Activated T-helper 1 cell treated with anti-CD3 and anti-CD28 coated beads, Interleukin-12 subunit alpha, Interleukin-12 subunit beta, Interleukin-2, Interleukin-4 antibody, amounts not matched to agents 30 ng/mL and 10 ng/mL and 1 ng/mL, durations not matched to agents 14 hours and 24 hours and 36 hours (primary cell): ENCODE measurements at regions of chr17 and their contacts with region 1.

Region 1: DNA sequence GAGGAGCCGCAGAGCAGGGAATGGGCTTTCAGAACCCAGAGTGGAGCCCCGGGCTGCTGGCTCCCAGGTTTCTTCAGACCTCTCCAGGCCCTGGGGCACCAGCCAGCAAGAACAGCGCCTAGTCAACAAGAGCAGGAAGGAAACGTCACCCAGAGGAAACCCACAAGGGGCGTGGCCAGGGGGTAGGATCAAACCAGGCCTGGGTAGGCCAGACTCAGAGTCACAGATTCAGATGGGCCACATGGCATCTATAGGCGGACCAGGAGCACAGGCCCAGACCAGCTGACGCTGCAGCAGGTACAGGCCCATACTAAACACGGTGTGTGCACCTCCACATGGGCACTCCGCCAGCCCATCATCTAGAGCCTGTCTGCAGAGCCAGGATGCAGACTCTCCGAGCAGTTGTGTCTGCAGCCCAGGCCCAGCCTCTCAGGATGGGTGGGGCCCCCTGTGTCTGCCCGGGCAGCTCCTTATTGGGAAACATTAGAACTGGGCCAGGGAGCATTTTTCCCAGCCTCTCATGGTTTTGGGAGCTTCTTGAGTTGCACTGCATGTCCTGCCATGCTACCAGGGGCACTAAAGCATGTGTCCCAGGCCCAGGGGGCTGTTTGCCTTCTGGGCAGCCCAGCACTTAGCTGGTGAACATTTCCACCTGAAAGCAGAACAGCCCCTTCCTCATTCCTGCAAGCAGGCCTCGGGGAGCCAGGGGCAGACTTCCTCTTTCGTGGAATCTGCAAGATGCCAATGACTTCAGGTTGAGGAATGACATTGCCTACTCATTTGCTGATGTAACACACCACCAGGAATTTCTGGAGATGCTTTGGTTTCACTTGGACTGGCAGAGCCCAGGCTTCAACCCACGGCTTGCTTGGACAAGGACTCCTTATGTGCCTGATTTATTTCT is at the start of gene NLRP1:
- DNase-seq: peak; percentile 93
- H3K4me3 Mint-ChIP-seq: peak within 1 kb of the TSS; percentile 95
- H3K27ac Mint-ChIP-seq: peak within 1 kb of the TSS; percentile 93
- H3K4me1 Mint-ChIP-seq: peaks cover 49% of the 10 kb centered on the region
- H3K27me3 Mint-ChIP-seq: peaks cover 3% of the 10 kb centered on the region
- total RNA-seq, gene NLRP1: 26.0 and 29.6 TPM in 2 replicates

Region 2: GRCh38 chr17:5468075-5468473 is 116.6 kb before region 1 on chr17:
- intact Hi-C with region 1: no loop called
- DNase-seq: no peak
- H3K4me3 Mint-ChIP-seq: peak overlapping the region; percentile 92
- H3K27ac Mint-ChIP-seq: peak overlapping the region; percentile 46
- H3K4me1 Mint-ChIP-seq: peaks cover 50% of the 10 kb centered on the region
- H3K27me3 Mint-ChIP-seq: no peaks in the 10 kb centered on the region

Region 3: DNA sequence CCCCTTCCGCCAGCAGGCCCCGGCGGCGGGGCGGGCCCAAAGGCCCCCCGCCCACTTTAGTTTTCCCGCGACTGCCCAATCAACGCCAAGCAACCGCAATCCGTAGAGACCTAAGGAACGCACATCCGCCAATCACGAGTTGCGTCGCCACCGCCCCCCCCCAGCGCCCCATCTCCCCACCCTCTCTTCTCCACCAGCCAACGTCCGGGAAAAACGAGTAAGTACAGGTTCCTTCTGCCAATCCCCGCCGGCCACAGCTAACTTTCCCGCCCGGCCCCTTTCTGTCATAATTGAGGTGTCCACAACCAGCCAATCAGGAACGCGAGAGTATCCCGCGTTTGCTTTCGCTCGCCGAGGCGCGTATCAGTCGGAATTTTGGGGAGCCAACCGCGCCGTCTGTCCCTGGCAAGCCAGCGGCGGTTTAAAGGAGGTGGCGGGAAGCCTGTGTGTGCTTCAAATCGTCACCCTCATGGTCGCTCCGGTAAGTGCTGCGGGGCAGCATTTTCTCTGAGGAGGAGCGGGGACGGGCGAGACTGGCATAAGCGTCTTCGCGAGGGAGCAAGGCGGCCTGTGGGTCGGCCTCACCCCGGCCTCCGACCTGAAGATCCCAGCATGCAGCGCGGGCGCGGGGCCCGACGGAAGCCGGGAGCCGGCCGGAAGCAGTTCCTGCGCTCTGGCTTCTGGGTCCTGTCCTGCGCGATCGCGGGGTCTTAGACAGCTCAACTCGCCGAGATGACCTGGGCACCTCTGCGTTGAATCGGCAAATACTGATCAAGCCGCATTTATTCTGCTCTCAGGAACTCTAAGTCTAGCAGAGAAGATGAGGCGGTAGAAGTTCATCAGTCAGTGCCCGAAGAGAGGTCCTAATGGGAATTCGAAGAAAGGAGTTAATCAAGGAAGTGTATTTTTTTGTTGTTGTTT is 98.2 kb before region 1 on chr17 and contains the start of gene MIS12:
- intact Hi-C with region 1: loop called (anchors 1 kb)
- DNase-seq: peak; percentile 95
- H3K4me3 Mint-ChIP-seq: peak within 1 kb of the TSS; percentile 98
- H3K27ac Mint-ChIP-seq: peak within 1 kb of the TSS; percentile 96
- H3K4me1 Mint-ChIP-seq: peaks cover 49% of the 10 kb centered on the region
- H3K27me3 Mint-ChIP-seq: no peaks in the 10 kb centered on the region
- total RNA-seq, gene MIS12: 38.1 and 39.6 TPM in 2 replicates

Region 4: GRCh38 chr17:5526821-5527598 is 57.6 kb before region 1 on chr17:
- intact Hi-C with region 1: loop called (anchors 2 kb)
- DNase-seq: peak; percentile 18
- H3K4me3 Mint-ChIP-seq: no peak overlapping the region
- H3K27ac Mint-ChIP-seq: peak overlapping the region; percentile 84
- H3K4me1 Mint-ChIP-seq: peaks cover 13% of the 10 kb centered on the region
- H3K27me3 Mint-ChIP-seq: no peaks in the 10 kb centered on the region

Region 5: GRCh38 chr17:6421700-6422604 is 837.3 kb after region 1 on chr17:
- intact Hi-C with region 1: loop called (anchors 1 kb)
- DNase-seq: peak; percentile 48
- H3K4me3 Mint-ChIP-seq: no peak overlapping the region
- H3K27ac Mint-ChIP-seq: peak overlapping the region; percentile 34
- H3K4me1 Mint-ChIP-seq: peaks cover 2% of the 10 kb centered on the region
- H3K27me3 Mint-ChIP-seq: peaks cover 50% of the 10 kb centered on the region

Region 6: DNA sequence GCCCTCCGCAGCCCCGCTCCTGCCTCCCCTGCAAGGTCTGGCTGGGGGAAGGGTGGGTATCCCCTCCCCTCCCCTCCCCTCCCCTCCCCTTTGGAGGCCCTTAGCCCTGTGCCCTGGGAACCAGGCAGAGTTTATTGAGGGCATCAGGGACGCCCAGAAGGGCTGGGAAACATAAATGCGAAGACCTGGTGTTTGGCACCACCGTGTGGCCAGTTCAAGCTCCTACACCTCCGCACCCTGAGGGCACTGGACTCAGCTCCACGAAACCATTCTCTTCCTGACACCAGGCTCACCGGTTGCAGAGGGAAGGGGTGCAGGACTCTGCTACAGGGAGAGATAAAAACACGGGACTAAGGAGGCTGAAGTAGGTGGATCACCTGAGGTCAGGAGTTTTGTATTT is 851.3 kb after region 1 on chr17:
- intact Hi-C with region 1: loop called (anchors 1 kb)
- DNase-seq: peak; percentile 44
- H3K4me3 Mint-ChIP-seq: no peak overlapping the region
- H3K27ac Mint-ChIP-seq: no peak overlapping the region
- H3K4me1 Mint-ChIP-seq: no peaks in the 10 kb centered on the region
- H3K27me3 Mint-ChIP-seq: peaks cover 59% of the 10 kb centered on the region

Region 7: GRCh38 chr17:6753006-6753445 is 1168.4 kb after region 1 on chr17:
- intact Hi-C with region 1: loop called (anchors 10 kb)
- DNase-seq: no peak
- H3K4me3 Mint-ChIP-seq: no peak overlapping the region
- H3K27ac Mint-ChIP-seq: peak overlapping the region; percentile 64
- H3K4me1 Mint-ChIP-seq: peaks cover 52% of the 10 kb centered on the region
- H3K27me3 Mint-ChIP-seq: peaks cover 4% of the 10 kb centered on the region

Region 8: GRCh38 chr17:7014261-7014994 is 1429.8 kb after region 1 on chr17:
- intact Hi-C with region 1: loop called (anchors 5 kb)
- DNase-seq: peak; percentile 98
- H3K4me3 Mint-ChIP-seq: peak overlapping the region; percentile 99
- H3K27ac Mint-ChIP-seq: peak overlapping the region; percentile 99
- H3K4me1 Mint-ChIP-seq: peaks cover 68% of the 10 kb centered on the region
- H3K27me3 Mint-ChIP-seq: peaks cover 6% of the 10 kb centered on the region